A549 (cell line): ENCODE measurements at regions of chr6 and their contacts with region 1.

Region 1: DNA sequence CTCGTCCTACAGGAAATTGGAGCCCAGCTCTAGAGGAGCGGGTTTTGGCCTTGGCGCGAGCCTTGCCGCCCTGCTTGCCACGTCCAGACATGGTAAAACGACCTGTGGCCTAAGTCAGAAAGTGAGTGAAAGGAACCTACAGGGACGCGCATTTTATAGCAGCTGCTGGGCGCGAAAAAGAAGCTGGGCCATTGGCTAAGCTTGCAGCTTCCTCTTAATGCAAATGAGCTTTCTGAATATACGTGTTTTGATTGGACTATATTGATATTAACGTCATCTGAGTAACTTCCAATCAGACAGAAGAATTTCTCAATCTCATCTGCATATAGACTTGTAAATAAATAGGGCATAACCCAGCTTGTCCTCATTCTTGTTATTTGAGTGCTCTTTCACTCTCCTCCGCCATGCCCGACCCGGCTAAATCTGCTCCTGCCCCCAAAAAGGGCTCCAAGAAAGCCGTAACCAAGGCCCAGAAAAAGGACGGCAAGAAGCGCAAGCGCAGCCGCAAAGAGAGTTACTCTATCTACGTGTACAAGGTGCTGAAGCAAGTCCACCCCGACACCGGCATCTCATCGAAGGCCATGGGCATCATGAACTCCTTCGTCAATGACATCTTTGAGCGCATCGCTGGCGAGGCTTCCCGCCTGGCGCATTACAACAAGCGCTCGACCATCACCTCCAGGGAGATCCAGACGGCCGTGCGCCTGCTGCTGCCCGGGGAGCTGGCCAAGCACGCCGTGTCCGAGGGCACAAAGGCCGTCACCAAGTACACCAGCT is 18.9 kb downstream of the OR2B2 start:
- DNase-seq: peak; percentile 83 to 97
- ATAC-seq: peak; percentile 51 to 68
- H3K4me3 ChIP-seq: peak overlapping the region; percentile 73
- H3K27ac ChIP-seq: peak overlapping the region; percentile 91 to 97
- H3K4me1 ChIP-seq: peaks cover 22% of the 10 kb centered on the region
- CTCF ChIP-seq: no peak
- EP300 ChIP-seq: no peak
- POLR2A ChIP-seq: peak; percentile 97
- RAD21 ChIP-seq: no peak

Region 2: GRCh38 chr6:26031595-26032339 is 1861.5 kb before region 1 on chr6:
- CTCF ChIA-PET with region 1: no interaction called
- POLR2A ChIA-PET with region 1: interaction called, 15 read pairs
- DNase-seq: peak; percentile 86 to 97
- ATAC-seq: peak; percentile 68 to 78
- H3K4me3 ChIP-seq: peak overlapping the region; percentile 56
- H3K27ac ChIP-seq: peak overlapping the region; percentile 95 to 100
- H3K4me1 ChIP-seq: peaks cover 38% of the 10 kb centered on the region
- CTCF ChIP-seq: no peak
- EP300 ChIP-seq: no peak
- POLR2A ChIP-seq: peak; percentile 96
- RAD21 ChIP-seq: no peak

Region 3: DNA sequence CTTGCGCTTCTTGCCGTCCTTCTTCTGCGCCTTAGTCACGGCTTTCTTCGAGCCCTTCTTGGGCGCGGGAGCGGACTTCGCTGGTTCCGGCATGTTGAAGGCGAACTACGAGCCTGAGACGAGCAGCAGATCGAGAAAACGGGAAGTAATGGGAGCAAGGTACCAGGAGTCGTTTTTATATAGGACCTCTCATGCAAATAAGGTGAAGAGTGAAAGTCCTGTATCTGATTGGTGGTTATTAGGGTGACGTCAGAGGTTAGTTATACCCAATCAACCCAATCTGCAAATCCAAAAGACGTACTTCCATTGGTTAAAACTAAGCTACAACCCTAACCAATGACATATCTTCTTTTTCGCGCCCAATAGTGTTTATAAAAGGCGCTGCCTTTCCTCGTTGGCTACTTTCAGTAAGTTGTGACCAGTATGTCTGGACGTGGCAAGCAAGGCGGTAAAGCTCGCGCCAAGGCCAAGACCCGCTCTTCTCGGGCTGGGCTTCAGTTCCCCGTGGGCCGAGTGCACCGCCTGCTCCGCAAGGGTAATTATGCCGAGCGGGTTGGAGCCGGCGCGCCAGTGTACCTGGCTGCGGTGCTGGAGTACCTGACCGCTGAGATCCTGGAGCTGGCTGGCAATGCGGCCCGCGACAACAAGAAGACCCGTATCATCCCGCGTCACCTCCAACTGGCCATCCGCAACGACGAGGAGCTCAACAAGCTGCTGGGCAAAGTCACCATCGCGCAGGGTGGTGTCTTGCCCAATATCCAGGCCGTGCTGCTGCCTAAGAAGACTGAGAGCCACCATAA is 746.3 kb before region 1 on chr6:
- CTCF ChIA-PET with region 1: no interaction called
- POLR2A ChIA-PET with region 1: interaction called, 44 read pairs
- DNase-seq: peak; percentile 96 to 99
- ATAC-seq: peak; percentile 82 to 84
- H3K4me3 ChIP-seq: peak overlapping the region; percentile 67
- H3K27ac ChIP-seq: peak overlapping the region; percentile 89 to 98
- H3K4me1 ChIP-seq: peaks cover 26% of the 10 kb centered on the region; the same call in 2 of the 3 replicates
- CTCF ChIP-seq: no peak
- EP300 ChIP-seq: no peak
- POLR2A ChIP-seq: peak; percentile 96
- RAD21 ChIP-seq: no peak

Region 4: GRCh38 chr6:27816906-27817305 is 76.3 kb before region 1 on chr6:
- CTCF ChIA-PET with region 1: interaction called, 40 read pairs
- POLR2A ChIA-PET with region 1: interaction called, 270 read pairs
- DNase-seq: no peak
- ATAC-seq: no peak
- H3K4me3 ChIP-seq: no peak overlapping the region
- H3K27ac ChIP-seq: peak overlapping the region; percentile 77 to 81
- H3K4me1 ChIP-seq: peaks cover 17% of the 10 kb centered on the region; the same call in 1 of the 3 replicates
- CTCF ChIP-seq: no peak
- EP300 ChIP-seq: no peak
- POLR2A ChIP-seq: no peak
- RAD21 ChIP-seq: no peak

Region 5: DNA sequence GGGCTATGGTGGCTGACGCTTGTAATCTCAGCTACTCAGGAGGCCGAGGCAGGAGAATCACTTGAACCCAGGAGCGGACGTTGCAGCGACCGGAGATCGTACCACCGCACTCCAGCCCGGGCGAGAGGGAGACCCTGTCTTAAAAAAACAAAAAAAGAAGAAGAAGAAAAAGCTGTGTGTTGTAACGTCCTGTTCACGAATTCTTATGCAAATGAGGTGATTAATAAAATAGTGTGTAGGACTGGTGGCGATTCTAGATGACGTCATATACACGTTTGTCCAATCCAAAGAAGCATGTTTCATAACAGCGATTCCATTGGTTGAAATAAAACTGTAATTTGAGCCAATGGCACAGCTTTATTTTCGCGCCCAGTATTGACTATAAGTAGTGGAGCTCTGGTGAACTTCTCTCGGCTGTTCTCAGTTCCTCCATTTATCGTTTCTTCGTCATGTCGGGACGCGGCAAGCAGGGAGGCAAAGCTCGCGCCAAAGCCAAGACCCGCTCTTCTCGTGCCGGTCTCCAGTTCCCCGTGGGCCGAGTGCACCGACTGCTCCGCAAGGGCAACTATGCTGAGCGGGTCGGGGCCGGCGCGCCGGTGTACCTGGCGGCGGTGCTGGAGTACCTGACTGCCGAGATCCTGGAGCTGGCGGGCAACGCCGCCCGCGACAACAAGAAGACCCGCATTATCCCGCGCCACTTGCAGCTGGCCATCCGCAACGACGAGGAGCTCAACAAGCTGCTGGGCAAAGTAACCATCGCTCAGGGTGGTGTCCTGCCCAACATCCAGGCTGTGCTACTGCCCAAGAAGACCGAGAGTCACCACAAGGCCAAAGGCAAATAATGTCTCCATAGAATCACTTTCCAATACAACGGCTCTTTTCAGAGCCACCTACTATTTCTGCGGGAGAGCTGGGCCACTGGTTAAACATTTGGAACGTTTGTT is 28.1 kb before region 1 on chr6:
- CTCF ChIA-PET with region 1: interaction called, 8 read pairs
- POLR2A ChIA-PET with region 1: interaction called, 127 read pairs
- DNase-seq: peak; percentile 78 to 87
- ATAC-seq: peak; percentile 72 to 80
- H3K4me3 ChIP-seq: peak overlapping the region; percentile 52
- H3K27ac ChIP-seq: peak overlapping the region; percentile 74 to 81
- H3K4me1 ChIP-seq: 0 out of 3 replicates have a peak, but pooled peaks cover 4% of the 10 kb centered on the region
- CTCF ChIP-seq: no peak
- EP300 ChIP-seq: no peak
- POLR2A ChIP-seq: peak; percentile 32; the same call in 1 of the 2 replicates
- RAD21 ChIP-seq: no peak

Region 6: GRCh38 chr6:28176373-28176772 is 283.1 kb after region 1 on chr6:
- CTCF ChIA-PET with region 1: no interaction called
- POLR2A ChIA-PET with region 1: no interaction called
- DNase-seq: no peak
- ATAC-seq: no peak
- H3K4me3 ChIP-seq: no peak overlapping the region
- H3K27ac ChIP-seq: no peak overlapping the region
- H3K4me1 ChIP-seq: no peaks in the 10 kb centered on the region
- CTCF ChIP-seq: no peak
- EP300 ChIP-seq: no peak
- POLR2A ChIP-seq: no peak
- RAD21 ChIP-seq: no peak

Region 7: DNA sequence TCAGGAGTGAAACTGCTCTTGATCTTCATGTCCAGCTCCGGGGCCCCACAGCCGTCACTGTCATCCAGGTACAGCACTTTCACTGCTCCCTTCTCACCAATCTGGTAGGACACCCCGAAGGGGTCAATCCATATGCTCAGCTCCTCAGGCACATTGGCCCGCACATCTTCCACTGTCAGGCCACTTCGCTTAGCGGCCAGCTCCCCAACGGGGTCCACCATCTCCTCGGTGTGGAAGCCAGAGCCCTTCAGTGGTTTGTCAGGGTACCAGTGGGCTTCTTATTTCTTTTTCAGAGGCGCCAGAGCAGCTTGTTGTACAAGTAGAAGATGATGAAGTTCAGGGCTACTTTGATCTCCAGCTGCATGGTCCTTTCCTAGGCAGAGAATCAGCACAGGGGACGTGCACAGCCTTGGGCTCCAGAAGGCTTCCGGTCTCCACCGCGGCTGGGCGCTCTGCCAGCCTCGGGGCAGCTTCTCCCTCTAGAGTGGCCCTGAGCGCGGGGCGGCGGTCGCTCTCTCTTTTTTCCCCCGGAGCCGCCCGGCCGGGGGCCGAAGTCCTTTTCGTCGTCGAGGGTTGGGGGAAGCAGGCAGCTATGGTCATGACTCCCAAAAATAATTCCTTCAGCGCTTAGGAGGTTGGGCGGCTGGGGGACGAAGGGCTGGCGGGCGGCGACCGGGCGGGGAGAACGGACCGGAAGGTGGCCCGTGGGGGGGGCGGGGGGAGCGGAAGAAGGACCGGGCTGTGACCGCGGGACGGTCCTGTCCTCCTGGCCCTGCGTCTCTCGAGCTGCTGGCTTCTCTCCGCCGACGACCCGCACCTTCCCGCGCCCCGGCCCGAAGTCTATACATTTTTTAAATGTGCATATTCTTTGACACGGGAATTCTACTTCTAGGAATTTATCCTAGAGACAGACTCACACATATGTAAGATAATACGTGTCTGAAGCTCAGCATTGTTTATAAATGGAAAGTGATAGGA is 325.3 kb after region 1 on chr6:
- CTCF ChIA-PET with region 1: no interaction called
- POLR2A ChIA-PET with region 1: interaction called, 10 read pairs
- DNase-seq: peak; percentile 46 to 59
- ATAC-seq: peak; percentile 92 to 96
- H3K4me3 ChIP-seq: peak overlapping the region; percentile 57
- H3K27ac ChIP-seq: peak overlapping the region; percentile 92 to 98
- H3K4me1 ChIP-seq: peaks cover 7% of the 10 kb centered on the region; the same call in 1 of the 3 replicates
- CTCF ChIP-seq: no peak
- EP300 ChIP-seq: no peak
- POLR2A ChIP-seq: peak; percentile 67
- RAD21 ChIP-seq: no peak